Breast epithelium (tissue), 4 donors: ENCODE measurements at regions of chr19 and their contacts with region 1.

Region 1: GRCh38 chr19:4597975-4598671 is 38.6 kb upstream of the SEMA6B start:
- DNase-seq: no peak
- H3K4me3 ChIP-seq: peak overlapping the region in 2 of 3 donors; percentile 25 to 51
- H3K27ac ChIP-seq: no peak overlapping the region
- H3K4me1 ChIP-seq: no peaks in the 10 kb centered on the region
- H3K27me3 ChIP-seq: peaks cover 3 to 39% of the 10 kb centered on the region in 2 donors
- CTCF ChIP-seq: no peak
- POLR2A ChIP-seq: no peak

Region 2: DNA sequence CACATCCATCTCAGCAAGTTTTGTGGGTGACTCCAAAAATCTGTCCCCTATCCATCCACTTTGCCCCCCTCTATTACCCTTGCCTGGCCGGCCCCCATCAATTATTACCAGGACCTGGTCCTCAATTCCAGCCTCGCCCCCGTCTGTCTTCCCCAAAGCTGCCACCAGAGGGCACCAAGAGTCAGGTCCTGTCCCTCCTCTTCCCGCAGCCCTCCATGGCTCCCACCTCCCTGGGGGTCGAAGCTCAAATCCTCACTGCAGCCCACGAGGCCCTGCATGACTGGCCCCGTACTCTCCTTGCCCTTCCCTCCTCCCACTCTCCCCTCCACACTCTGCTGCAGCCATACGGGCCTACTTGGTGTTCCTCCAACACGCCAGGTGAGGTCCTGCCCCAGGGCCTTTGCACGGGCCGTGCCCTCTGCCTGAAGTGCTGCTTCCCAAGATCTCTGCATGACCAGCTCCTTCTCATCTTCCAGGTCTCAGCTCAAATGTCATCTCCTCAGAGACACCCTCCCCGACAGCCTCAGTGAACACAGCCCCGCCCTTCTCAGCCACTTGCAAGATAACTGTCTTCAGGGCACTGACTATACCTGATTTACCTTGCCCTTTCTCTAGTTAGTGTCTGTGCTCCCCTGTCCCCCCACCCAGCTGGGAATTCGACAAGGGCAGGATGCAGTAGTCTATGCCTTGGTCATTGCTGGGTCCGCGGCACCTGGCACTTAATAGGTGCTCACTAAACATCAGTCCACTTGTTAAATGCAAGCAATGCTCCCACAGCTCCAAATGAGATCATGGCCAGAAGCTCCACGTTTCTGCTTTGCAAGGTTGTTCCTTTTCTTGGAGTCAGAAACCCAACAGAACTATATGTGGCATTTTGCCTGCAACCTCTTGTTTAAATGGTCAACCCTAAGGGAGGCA is 21.8 kb before region 1 on chr19:
- intact Hi-C with region 1: no loop called
- DNase-seq: peak; percentile 28 to 66
- H3K4me3 ChIP-seq: no peak overlapping the region
- H3K27ac ChIP-seq: peak overlapping the region; percentile 60 to 76
- H3K4me1 ChIP-seq: no peaks in the 10 kb centered on the region
- H3K27me3 ChIP-seq: peaks cover 6 to 52% of the 10 kb centered on the region in 2 donors
- CTCF ChIP-seq: peak; percentile 40 to 66 (median 64)
- POLR2A ChIP-seq: no peak

Region 3: DNA sequence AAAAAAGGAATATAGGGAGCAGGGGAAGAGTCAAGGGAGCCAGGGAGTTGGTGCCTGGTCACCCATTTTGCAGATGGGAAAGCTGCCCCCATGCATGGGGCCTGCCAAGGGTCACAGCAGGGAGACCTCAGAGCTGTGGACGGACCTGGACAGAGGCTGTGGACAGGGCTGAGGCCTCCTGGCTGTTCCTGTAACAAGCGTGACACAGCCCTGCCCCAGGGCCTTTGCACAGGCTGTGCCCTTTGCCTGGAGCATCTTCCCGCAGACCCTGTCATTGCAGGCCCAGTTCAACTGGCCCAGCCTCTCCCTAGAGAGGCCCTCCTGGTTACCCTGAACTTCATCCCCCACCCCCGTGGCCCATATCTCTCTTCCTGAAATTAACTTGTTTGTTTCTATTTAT is 47.6 kb after region 1 on chr19:
- intact Hi-C with region 1: loop called (anchors 1 kb)
- DNase-seq: no peak
- H3K4me3 ChIP-seq: no peak overlapping the region
- H3K27ac ChIP-seq: no peak overlapping the region
- H3K4me1 ChIP-seq: no peaks in the 10 kb centered on the region
- H3K27me3 ChIP-seq: no peaks in the 10 kb centered on the region
- CTCF ChIP-seq: no peak
- POLR2A ChIP-seq: no peak